ENCODE measurements at regions of chr1 and their contacts with region 1.

Region 1: GRCh38 chr1:214123061-214123784 is 135.4 kb downstream of the PROX1 start:
- DNase-seq: peak; percentile 8 to 80 (median 52)

Region 2: GRCh38 chr1:213122514-213122929 is 1000.7 kb before region 1 on chr1:
- intact Hi-C with region 1: loop called (anchors 10 kb)
- DNase-seq: peak in 2 of 42 donors; percentile 20 to 27

Region 3: DNA sequence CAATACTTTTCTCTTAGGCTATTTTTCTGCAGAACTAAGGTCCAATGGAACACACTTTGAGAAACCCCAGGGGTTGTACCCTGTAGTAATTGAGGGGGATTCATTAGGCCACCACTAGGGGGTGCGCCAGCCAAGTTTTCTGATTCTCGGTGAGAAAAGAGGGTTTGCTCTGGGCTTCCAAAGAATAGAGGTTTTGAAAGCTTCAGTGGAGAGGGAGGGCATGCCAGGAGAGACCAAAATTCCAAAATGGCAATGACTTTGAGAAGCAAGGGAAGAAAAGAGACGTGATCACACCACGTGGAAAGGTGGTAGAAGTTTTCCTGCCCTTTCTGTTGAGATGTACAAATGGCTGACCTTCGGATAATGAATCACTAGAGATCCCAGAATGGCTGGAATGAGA is 748.9 kb before region 1 on chr1:
- intact Hi-C with region 1: loop called (anchors 5 kb)
- DNase-seq: peak; percentile 42 to 90 (median 75)

Region 4: GRCh38 chr1:213564215-213564659 is 559.0 kb before region 1 on chr1:
- intact Hi-C with region 1: loop called (anchors 10 kb)
- DNase-seq: peak in 2 of 42 donors; percentile 5 to 27

Region 5: GRCh38 chr1:215256936-215257679 is 1133.9 kb after region 1 on chr1:
- intact Hi-C with region 1: no loop called
- DNase-seq: no peak